GM12878 (cell line): ENCODE measurements at regions of chr6 and their contacts with region 1.

Region 1: GRCh38 chr6:112180095-112180820 is 74.1 kb downstream of the LAMA4 start:
- DNase-seq: no peak
- ATAC-seq: peak; percentile 94
- H3K4me3 ChIP-seq: no peak overlapping the region
- H3K27ac ChIP-seq: no peak overlapping the region
- H3K4me1 ChIP-seq: no peaks in the 10 kb centered on the region
- H3K27me3 ChIP-seq: peaks cover 0 to 3% of the 10 kb centered on the region in 2 experiments; a peak in 2 of 4 replicates
- CTCF ChIP-seq: peak; percentile 48 to 74 (median 57); a peak in 5 of 6 replicates
- EP300 ChIP-seq: no peak
- POLR2A ChIP-seq: no peak
- RAD21 ChIP-seq: peak; percentile 80

Region 2: DNA sequence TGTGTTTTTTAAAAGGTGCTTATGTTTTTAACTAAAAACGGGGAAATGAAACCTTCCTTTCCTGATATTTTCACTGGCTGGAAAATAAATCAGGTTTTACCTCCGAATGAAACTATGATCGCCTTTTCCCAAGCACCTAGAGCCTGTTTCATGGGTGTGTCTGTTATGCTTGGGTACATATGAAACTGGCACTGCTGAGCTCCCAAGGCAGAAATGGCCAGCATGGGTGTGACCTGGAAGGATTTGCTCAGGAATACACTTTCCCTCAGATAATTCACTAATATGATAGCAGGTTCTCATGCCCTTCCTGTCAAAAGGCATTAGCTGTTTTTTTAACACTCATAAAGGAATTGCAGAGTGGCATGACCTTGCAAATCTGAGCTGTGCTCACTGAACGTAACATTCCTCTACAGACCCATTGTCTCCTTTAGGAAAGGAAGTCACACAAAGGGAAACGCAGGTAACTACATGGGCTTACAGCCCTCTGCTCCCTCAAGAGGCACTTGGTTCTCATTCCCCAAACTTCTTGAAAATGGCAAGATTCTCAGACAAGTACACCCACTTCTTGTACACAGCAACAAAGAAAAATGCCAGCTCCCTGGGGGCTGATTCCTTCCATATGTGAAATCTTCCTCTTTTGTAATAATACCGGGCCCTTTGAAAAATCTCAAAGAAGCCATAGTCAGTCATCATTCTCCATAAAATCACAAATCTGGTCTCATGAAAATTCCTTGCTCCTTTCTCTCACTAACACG is 1894.8 kb before region 1 on chr6:
- CTCF ChIA-PET with region 1: no interaction called
- POLR2A ChIA-PET with region 1: no interaction called
- RAD21 ChIA-PET with region 1: no interaction called
- SMC1A ChIA-PET with region 1: no interaction called
- in situ Hi-C with region 1: no loop called
- intact Hi-C with region 1: no loop called
- DNase-seq: no peak
- ATAC-seq: no peak
- H3K4me3 ChIP-seq: no peak overlapping the region
- H3K27ac ChIP-seq: no peak overlapping the region
- H3K4me1 ChIP-seq: no peaks in the 10 kb centered on the region
- H3K27me3 ChIP-seq: peaks cover 0 to 2% of the 10 kb centered on the region in 2 experiments; a peak in 1 of 4 replicates
- CTCF ChIP-seq: no peak
- EP300 ChIP-seq: no peak
- POLR2A ChIP-seq: no peak
- RAD21 ChIP-seq: no peak

Region 3: DNA sequence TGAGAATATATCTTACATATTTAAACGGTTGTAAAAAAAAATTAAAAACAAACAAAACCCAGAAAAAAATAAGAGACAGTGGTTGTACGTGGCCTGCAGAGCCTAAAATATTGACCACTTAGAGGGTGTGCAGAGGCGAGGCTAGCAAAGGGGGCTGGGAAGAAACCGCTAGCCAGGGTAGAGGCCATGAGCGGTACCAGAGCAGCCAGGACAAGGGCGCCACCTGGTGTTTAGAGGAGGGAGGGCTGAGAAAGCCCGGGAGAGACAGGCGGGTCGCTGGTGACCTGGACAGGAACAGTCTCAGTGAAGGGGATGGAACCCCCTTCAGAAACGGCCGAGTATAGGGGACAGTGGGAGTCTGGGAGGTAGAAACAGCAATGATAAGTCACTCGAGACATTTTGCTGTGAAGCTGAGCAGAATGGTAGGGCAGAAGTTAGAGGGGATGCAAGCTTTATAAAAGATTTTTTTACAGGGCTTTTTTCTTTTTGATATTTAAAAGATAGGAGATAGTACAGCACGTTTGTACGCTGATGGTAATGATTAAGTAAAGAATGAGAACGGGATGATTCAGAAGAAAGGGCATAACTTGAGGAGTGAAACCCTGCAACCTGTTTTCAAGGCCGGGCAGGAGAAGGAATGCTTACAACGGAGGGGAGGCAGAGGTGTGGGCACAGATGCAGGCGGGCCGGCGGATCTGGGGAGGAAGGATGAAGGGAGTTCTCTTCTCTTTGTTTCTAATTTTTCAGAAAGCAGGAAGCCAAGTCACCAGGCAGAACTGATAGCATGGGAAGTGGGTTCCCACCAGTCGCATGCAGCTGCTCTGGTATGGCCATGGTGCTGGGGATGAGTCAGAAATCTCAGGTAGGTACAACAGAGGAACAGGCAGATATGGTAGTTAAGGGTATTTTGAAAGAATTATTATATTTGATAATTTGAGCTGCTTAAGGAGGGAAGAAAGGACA is 16.7 kb before region 1 on chr6:
- CTCF ChIA-PET with region 1: interaction called, 20 read pairs
- POLR2A ChIA-PET with region 1: no interaction called
- RAD21 ChIA-PET with region 1: interaction called, 4 read pairs
- SMC1A ChIA-PET with region 1: interaction called, 4 read pairs
- in situ Hi-C with region 1: no loop called
- intact Hi-C with region 1: no loop called
- DNase-seq: peak; percentile 7
- ATAC-seq: peak; percentile 100
- H3K4me3 ChIP-seq: no peak overlapping the region
- H3K27ac ChIP-seq: no peak overlapping the region
- H3K4me1 ChIP-seq: peaks cover 3% of the 10 kb centered on the region; the same call in 1 of the 2 replicates
- H3K27me3 ChIP-seq: peaks cover 3 to 14% of the 10 kb centered on the region in 2 experiments
- CTCF ChIP-seq: peak; percentile 82 to 96 (median 96)
- EP300 ChIP-seq: no peak
- POLR2A ChIP-seq: no peak
- RAD21 ChIP-seq: peak; percentile 90

Region 4: DNA sequence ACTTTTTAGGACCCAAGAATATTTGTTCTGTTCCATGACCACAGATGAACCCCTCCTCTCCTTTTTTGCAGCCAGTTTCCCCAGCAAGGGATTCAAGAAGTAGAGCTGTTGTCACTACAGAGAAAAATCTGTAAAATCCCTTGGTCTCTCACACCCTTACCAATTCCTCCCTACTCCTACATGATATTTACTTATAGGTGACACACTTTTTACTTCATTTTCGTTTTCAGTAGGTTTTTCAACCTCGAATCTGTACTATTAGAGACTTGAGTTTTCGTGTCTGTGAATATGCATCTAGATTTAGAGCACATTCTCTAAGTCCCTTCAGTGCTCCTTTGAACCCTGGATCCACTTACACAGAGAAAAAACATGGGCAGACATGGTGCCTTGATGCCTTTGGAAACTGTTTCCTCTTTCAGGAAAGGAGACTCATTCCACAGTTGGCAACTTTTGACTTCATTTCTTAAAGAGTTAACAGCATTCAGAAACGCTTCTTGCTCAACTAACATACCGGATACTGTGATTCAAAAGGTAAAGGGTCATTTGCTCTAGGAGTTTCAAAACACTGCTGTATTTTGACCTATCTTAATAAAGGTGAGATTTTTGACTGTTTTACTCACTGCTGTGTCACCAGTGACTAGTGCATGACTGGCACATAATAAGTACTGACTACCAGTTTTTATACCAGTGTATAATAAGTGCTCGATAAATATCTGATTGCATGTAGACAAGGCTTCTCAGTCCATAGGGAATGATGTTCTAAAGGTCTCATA is 23.5 kb after region 1 on chr6:
- CTCF ChIA-PET with region 1: interaction called, 6 read pairs
- POLR2A ChIA-PET with region 1: no interaction called
- RAD21 ChIA-PET with region 1: interaction called, 13 read pairs
- SMC1A ChIA-PET with region 1: interaction called, 5 read pairs
- in situ Hi-C with region 1: no loop called
- intact Hi-C with region 1: no loop called
- DNase-seq: no peak
- ATAC-seq: peak; percentile 54
- H3K4me3 ChIP-seq: no peak overlapping the region
- H3K27ac ChIP-seq: no peak overlapping the region
- H3K4me1 ChIP-seq: no peaks in the 10 kb centered on the region; the same call in 1 of the 2 replicates
- H3K27me3 ChIP-seq: no peaks in the 10 kb centered on the region
- CTCF ChIP-seq: no peak
- EP300 ChIP-seq: no peak
- POLR2A ChIP-seq: no peak
- RAD21 ChIP-seq: no peak

Region 5: DNA sequence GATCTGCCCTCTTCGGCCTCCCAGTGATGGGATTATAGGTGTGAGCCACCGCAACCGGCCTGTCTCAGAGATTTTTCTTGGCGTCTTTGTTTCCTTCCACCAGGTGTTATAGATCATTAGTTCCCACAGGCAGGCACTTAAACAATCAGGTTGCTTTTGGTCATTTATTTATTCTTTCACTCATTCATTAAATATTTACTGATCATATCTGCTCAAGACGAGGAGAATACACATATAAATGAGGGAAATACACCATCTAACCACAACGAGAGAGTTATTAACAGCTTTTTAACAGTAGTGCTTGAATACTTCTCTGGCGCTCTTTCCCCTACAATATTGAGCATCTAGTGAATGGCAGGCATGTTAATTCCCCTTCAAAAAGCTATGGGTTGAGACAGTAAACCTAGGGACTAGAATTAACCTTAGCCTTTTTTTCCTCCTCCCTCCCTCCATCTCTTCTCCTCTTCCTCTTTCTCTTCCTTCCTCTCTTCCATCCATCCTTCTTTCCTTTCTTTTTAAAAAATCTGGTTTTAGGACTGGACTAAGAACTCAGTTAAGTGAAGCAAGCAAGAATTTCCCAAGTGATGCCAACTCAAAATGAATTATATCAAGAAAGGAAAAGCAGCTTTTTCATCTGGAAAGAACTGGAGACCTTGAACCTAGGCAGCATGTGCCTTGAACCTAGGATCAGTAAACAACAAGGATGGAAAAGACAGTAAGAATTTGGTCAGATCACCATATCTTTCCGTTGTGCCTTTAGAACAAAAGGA is 125.7 kb after region 1 on chr6:
- CTCF ChIA-PET with region 1: interaction called, 196 read pairs
- POLR2A ChIA-PET with region 1: interaction called, 4 read pairs
- RAD21 ChIA-PET with region 1: interaction called, 119 read pairs
- SMC1A ChIA-PET with region 1: interaction called, 118 read pairs
- in situ Hi-C with region 1: loop called (anchors 5 kb)
- intact Hi-C with region 1: no loop called
- DNase-seq: no peak
- ATAC-seq: no peak
- H3K4me3 ChIP-seq: no peak overlapping the region
- H3K27ac ChIP-seq: no peak overlapping the region
- H3K4me1 ChIP-seq: peaks cover 6% of the 10 kb centered on the region
- H3K27me3 ChIP-seq: no peaks in the 10 kb centered on the region
- CTCF ChIP-seq: no peak
- EP300 ChIP-seq: no peak
- POLR2A ChIP-seq: no peak
- RAD21 ChIP-seq: no peak

Region 6: GRCh38 chr6:112317041-112317860 is 137.0 kb after region 1 on chr6:
- CTCF ChIA-PET with region 1: interaction called, 40 read pairs
- POLR2A ChIA-PET with region 1: interaction called, 3 read pairs
- RAD21 ChIA-PET with region 1: interaction called, 23 read pairs
- SMC1A ChIA-PET with region 1: interaction called, 15 read pairs
- in situ Hi-C with region 1: no loop called
- intact Hi-C with region 1: loop called (anchors 1 kb)
- DNase-seq: no peak
- ATAC-seq: no peak
- H3K4me3 ChIP-seq: no peak overlapping the region
- H3K27ac ChIP-seq: no peak overlapping the region
- H3K4me1 ChIP-seq: no peaks in the 10 kb centered on the region
- H3K27me3 ChIP-seq: no peaks in the 10 kb centered on the region; a peak in 1 of 4 replicates
- CTCF ChIP-seq: no peak
- EP300 ChIP-seq: no peak
- POLR2A ChIP-seq: no peak
- RAD21 ChIP-seq: no peak

Region 7: GRCh38 chr6:112357791-112358190 is 177.5 kb after region 1 on chr6:
- CTCF ChIA-PET with region 1: no interaction called
- POLR2A ChIA-PET with region 1: no interaction called
- RAD21 ChIA-PET with region 1: no interaction called
- SMC1A ChIA-PET with region 1: no interaction called
- in situ Hi-C with region 1: no loop called
- intact Hi-C with region 1: no loop called
- DNase-seq: no peak
- ATAC-seq: no peak
- H3K4me3 ChIP-seq: no peak overlapping the region
- H3K27ac ChIP-seq: no peak overlapping the region
- H3K4me1 ChIP-seq: no peaks in the 10 kb centered on the region
- H3K27me3 ChIP-seq: no peaks in the 10 kb centered on the region; a peak in 1 of 4 replicates
- CTCF ChIP-seq: no peak
- EP300 ChIP-seq: no peak
- POLR2A ChIP-seq: no peak
- RAD21 ChIP-seq: no peak

Region 8: GRCh38 chr6:112760831-112761230 is 580.6 kb after region 1 on chr6:
- CTCF ChIA-PET with region 1: no interaction called
- POLR2A ChIA-PET with region 1: no interaction called
- RAD21 ChIA-PET with region 1: no interaction called
- SMC1A ChIA-PET with region 1: no interaction called
- in situ Hi-C with region 1: no loop called
- intact Hi-C with region 1: no loop called
- DNase-seq: no peak
- ATAC-seq: no peak
- H3K4me3 ChIP-seq: no peak overlapping the region
- H3K27ac ChIP-seq: no peak overlapping the region
- H3K4me1 ChIP-seq: no peaks in the 10 kb centered on the region
- H3K27me3 ChIP-seq: no peaks in the 10 kb centered on the region
- CTCF ChIP-seq: no peak
- EP300 ChIP-seq: no peak
- POLR2A ChIP-seq: no peak
- RAD21 ChIP-seq: no peak

Region 9: GRCh38 chr6:113909234-113909856 is 1729.1 kb after region 1 on chr6:
- CTCF ChIA-PET with region 1: interaction called, 16 read pairs
- POLR2A ChIA-PET with region 1: no interaction called
- RAD21 ChIA-PET with region 1: interaction called, 6 read pairs
- SMC1A ChIA-PET with region 1: no interaction called
- in situ Hi-C with region 1: loop called (anchors 25 kb)
- intact Hi-C with region 1: loop called (anchors 10 kb)
- DNase-seq: peak; percentile 7
- ATAC-seq: peak; percentile 84
- H3K4me3 ChIP-seq: no peak overlapping the region
- H3K27ac ChIP-seq: no peak overlapping the region
- H3K4me1 ChIP-seq: no peaks in the 10 kb centered on the region
- H3K27me3 ChIP-seq: no peaks in the 10 kb centered on the region
- CTCF ChIP-seq: peak; percentile 44 to 76 (median 50); a peak in 5 of 6 replicates
- EP300 ChIP-seq: no peak
- POLR2A ChIP-seq: no peak
- RAD21 ChIP-seq: peak; percentile 84